Heart right ventricle (tissue), 16 donors: ENCODE measurements at regions of chr18 and their contacts with region 1.

Region 1: GRCh38 chr18:55234366-55235093 is 275.3 kb upstream of the CCDC68 start:
- DNase-seq: peak; percentile 60 to 85
- ATAC-seq: peak; percentile 59 to 92 (median 86)
- H3K4me3 ChIP-seq: peak overlapping the region in 1 of 10 donors; percentile 3
- H3K27ac ChIP-seq: peak overlapping the region; percentile 39 to 89 (median 62)
- H3K4me1 ChIP-seq: peaks cover 3 to 63% (median 42%) of the 10 kb centered on the region in 9 donors
- H3K27me3 ChIP-seq: no peaks in the 10 kb centered on the region
- CTCF ChIP-seq: peak; percentile 59 to 84 (median 76)

Region 2: DNA sequence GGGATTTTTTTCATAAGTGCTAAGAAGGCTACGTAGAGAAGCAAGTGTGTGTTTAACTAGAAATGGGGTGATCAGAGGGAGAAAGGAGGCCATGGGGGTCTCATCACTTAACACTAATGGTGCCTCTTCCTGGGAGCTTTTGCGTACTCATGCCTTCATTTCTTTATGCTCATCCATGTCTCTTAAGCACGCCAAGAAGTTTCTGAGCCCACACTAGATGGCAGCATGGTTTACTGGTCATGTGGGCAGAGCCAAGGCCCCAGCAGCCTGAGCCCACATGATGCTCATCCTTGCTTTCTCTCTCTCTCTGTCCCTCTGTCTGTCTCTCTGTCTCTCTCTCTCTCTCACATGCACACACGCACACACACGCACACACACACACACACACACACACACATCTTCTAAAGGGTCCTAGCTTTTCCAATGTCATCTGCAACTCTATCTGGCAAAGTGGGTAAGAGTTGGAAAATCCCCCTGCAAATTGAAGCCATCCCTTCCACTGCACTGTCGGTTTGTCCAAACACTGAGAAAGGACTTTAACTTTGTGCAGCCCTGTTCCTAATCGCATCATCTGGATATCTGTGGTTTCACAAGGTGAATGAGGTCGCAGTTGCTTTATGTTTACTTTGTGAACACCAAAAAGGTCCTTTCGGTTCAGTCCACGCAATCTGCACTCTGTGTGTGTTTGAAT is 138.1 kb before region 1 on chr18:
- intact Hi-C with region 1: loop called in 2 of 10 experiments (anchors 5 kb)
- DNase-seq: peak in 1 of 2 donors; percentile 16
- ATAC-seq: peak in 7 of 8 donors; percentile 38 to 89 (median 86)
- H3K4me3 ChIP-seq: no peak overlapping the region
- H3K27ac ChIP-seq: peak overlapping the region in 1 of 10 donors; percentile 30
- H3K4me1 ChIP-seq: peaks cover 0 to 17% (median 8%) of the 10 kb centered on the region in 9 donors
- H3K27me3 ChIP-seq: no peaks in the 10 kb centered on the region
- CTCF ChIP-seq: peak in 8 of 9 donors; percentile 11 to 62 (median 42)

Region 3: DNA sequence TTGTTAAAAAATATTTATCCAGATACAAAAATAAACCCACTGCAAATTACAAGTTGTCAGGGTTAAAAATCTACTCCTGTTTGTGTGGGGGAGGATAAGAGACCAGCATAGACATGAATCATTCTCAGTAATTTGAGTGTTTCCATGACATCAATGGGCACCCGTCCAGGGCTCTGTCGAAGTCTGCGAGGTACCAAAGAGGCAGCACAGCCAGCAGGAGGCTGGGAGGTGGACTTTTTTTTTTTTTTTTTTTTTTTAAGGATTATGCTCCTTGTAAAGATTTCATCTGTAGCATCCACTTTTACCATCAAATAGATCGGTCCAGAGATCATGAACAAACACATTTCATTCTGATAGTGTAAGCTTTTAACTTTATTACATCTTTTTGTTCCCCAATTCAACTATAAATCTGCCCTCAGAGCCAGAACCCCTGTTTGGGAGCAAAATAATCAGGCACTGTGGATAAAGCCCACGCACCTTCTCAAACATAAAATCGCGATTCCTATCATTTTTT is 171.4 kb after region 1 on chr18:
- intact Hi-C with region 1: loop called in 6 of 10 experiments (anchors 5 to 10 kb)
- DNase-seq: peak; percentile 82 to 95
- ATAC-seq: peak; percentile 80 to 92 (median 88)
- H3K4me3 ChIP-seq: no peak overlapping the region
- H3K27ac ChIP-seq: peak overlapping the region; percentile 24 to 86 (median 82)
- H3K4me1 ChIP-seq: peaks cover 0 to 58% (median 38%) of the 10 kb centered on the region in 9 donors
- H3K27me3 ChIP-seq: no peaks in the 10 kb centered on the region
- CTCF ChIP-seq: peak in 5 of 9 donors; percentile 10 to 39 (median 24)

Region 4: DNA sequence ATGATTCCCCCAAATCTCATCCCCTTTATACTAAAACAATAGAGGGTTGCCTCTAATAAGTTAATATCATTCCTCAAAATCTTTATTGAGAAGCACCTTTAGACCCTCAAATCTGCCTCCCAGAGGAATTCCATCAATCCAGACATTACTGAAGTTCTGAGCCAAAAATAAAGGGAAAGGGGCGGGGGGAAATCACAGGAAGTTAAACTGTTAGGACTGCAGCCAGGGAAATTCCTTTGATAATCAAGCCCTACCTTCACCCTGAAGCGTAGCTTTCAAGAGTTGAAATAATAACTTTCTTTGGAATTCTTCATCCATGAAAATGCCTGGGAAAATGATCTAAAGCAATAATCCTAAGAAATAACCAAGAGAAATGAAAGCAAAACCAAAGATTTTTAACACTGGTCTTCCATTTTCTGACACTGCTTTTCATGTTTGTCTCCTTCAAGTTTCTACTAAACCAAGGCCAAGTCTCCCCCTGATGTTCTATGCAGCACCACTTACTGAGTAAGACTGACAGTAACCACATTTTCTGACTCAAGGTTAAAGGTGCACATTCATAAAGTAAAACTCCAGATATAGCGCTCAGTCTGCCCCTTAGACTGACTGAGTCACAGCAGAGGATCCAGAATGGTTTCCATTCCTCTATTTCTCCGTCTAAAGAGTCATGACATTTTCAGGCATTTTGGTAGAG is 275.2 kb after region 1 on chr18:
- intact Hi-C with region 1: loop called in 2 of 10 experiments (anchors 10 kb)
- DNase-seq: peak in 1 of 2 donors; percentile 76
- ATAC-seq: peak in 6 of 8 donors; percentile 25 to 79 (median 59)
- H3K4me3 ChIP-seq: peak overlapping the region in 8 of 10 donors; percentile 15 to 44 (median 38)
- H3K27ac ChIP-seq: peak overlapping the region; percentile 69 to 95 (median 88)
- H3K4me1 ChIP-seq: peaks cover 0 to 73% (median 46%) of the 10 kb centered on the region in 9 donors
- H3K27me3 ChIP-seq: no peaks in the 10 kb centered on the region
- CTCF ChIP-seq: no peak

Region 5: DNA sequence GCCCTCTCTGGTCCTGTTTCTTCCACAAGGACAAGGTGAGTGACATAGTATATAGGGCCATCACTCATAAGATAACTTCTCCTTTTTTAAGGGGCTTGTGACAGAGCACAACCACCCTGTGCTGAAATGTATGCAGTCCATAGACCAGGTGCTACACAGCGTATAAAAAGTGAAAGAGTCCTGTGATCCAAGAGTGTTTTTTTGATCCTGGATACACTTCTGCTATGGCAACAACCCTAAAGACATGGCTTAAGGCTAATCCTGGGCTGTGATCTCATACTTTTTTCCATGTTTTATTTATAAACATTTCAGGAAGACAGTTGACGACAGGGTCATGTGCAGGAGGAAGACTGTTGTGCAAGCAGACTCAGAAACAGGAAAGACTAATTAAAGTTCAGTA is 754.0 kb after region 1 on chr18:
- intact Hi-C with region 1: loop called in 1 of 10 experiments (anchors 10 kb)
- DNase-seq: peak in 1 of 2 donors; percentile 71
- ATAC-seq: peak; percentile 86 to 98 (median 94)
- H3K4me3 ChIP-seq: no peak overlapping the region
- H3K27ac ChIP-seq: peak overlapping the region in 9 of 10 donors; percentile 12 to 88 (median 63)
- H3K4me1 ChIP-seq: peaks cover 0 to 14% (median 5%) of the 10 kb centered on the region in 9 donors
- H3K27me3 ChIP-seq: no peaks in the 10 kb centered on the region
- CTCF ChIP-seq: no peak